Breast epithelium (tissue), 4 donors: ENCODE measurements at regions of chr5 and their contacts with region 1.

Region 1: DNA sequence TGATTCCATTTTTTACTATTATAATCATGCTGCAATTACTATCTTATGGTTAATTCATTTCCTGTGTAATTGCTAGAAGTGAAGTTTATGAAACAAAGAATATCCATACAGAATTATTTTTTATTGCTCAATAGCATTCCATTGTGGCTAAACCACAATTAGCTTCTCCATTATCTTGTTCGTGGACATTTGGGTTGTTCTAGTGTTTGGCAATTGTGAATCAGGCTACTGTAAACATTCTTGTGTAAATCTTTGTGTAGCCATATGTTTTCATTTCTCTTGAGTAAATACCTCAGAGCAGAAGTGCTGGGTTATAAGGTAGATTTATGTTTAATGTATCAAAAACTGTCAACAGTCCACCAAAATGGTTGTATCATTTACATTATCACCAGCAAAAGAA is 341.1 kb downstream of the MAT2B start:
- DNase-seq: no peak
- H3K4me3 ChIP-seq: no peak overlapping the region
- H3K27ac ChIP-seq: no peak overlapping the region
- H3K4me1 ChIP-seq: no peaks in the 10 kb centered on the region
- H3K27me3 ChIP-seq: no peaks in the 10 kb centered on the region
- CTCF ChIP-seq: no peak
- POLR2A ChIP-seq: no peak

Region 2: DNA sequence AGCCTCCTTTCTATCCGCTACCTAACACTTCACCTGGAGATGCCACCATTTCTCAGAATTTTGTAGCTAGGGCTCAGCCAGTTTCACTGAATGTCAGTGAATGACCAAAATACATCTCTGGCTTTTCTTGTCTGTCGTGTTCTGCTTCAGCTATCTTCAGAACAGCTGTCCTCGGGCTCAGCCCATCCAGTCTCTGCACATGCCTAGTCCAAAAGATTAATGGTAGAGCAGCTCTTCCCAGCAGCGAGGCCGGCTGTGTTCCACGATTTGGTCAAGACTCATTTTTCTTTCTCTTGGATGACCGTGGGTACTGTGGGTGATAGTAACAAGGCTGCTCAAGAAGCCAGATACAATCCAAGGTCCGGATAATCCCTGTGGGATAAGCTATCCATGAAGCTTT is 1436.2 kb before region 1 on chr5:
- intact Hi-C with region 1: no loop called
- DNase-seq: no peak
- H3K4me3 ChIP-seq: no peak overlapping the region
- H3K27ac ChIP-seq: no peak overlapping the region
- H3K4me1 ChIP-seq: no peaks in the 10 kb centered on the region
- H3K27me3 ChIP-seq: no peaks in the 10 kb centered on the region
- CTCF ChIP-seq: no peak
- POLR2A ChIP-seq: no peak

Region 3: GRCh38 chr5:162624110-162624509 is 1222.4 kb before region 1 on chr5:
- intact Hi-C with region 1: loop called (anchors 5 kb)
- DNase-seq: no peak
- H3K4me3 ChIP-seq: no peak overlapping the region
- H3K27ac ChIP-seq: no peak overlapping the region
- H3K4me1 ChIP-seq: no peaks in the 10 kb centered on the region
- H3K27me3 ChIP-seq: no peaks in the 10 kb centered on the region
- CTCF ChIP-seq: no peak
- POLR2A ChIP-seq: no peak

Region 4: GRCh38 chr5:163248871-163249270 is 597.6 kb before region 1 on chr5:
- intact Hi-C with region 1: no loop called
- DNase-seq: no peak
- H3K4me3 ChIP-seq: no peak overlapping the region
- H3K27ac ChIP-seq: no peak overlapping the region
- H3K4me1 ChIP-seq: no peaks in the 10 kb centered on the region
- H3K27me3 ChIP-seq: no peaks in the 10 kb centered on the region
- CTCF ChIP-seq: no peak
- POLR2A ChIP-seq: no peak

Region 5: DNA sequence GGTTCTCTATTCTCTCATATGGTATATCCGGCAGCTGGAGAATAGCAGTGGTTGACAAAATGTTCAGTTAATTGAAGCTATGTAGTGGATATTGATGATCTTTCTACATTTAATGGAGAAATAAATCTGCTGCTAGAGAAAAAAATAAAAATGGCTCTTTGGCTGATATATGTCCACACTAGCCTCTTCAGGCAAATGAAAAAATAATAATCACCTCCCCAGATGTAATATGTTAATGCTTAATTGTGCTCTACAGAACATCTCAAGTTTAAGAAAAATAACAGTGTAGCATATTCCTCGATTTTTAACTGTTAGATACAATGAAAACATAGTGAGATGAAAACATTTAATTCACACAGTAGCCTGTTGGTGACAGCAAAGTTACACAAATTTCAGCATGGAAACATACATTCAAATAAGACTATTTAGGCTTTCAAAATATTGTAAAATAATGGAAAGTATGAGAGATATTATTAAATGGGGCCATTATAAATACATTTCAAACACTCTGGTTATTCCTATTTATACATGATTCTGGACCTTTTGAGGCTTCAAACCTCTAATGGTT is 201.9 kb after region 1 on chr5:
- intact Hi-C with region 1: no loop called
- DNase-seq: no peak
- H3K4me3 ChIP-seq: no peak overlapping the region
- H3K27ac ChIP-seq: no peak overlapping the region
- H3K4me1 ChIP-seq: no peaks in the 10 kb centered on the region
- H3K27me3 ChIP-seq: no peaks in the 10 kb centered on the region
- CTCF ChIP-seq: no peak
- POLR2A ChIP-seq: no peak

Region 6: DNA sequence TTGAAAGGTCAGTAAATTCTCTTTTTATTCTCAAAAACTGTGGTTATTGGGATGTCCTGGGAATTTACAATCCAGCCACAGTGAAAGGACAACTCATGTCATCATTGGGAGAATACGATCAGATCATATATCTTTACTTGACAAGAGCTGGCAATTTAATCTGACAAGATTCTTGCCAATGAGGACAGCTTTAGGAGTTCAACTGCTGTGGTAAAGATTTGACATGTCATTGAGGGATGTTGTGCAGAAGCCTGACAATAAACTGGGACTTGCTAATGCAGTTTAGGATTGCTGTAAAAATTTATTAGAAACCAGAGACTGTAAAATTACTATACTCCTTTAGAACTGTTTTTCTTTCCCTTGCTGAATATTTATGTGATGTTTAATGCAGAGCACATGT is 789.9 kb after region 1 on chr5:
- intact Hi-C with region 1: no loop called
- DNase-seq: no peak
- H3K4me3 ChIP-seq: no peak overlapping the region
- H3K27ac ChIP-seq: no peak overlapping the region
- H3K4me1 ChIP-seq: no peaks in the 10 kb centered on the region
- H3K27me3 ChIP-seq: no peaks in the 10 kb centered on the region
- CTCF ChIP-seq: no peak
- POLR2A ChIP-seq: no peak